ENCODE measurements at regions of chr22 and their contacts with region 1.

Region 1: GRCh38 chr22:37199103-37199759 is 11.2 kb upstream of the C1QTNF6 start:
- DNase-seq: peak; percentile 99
- ATAC-seq: peak; percentile 94

Region 2: GRCh38 chr22:37077884-37078485 is 121.2 kb before region 1 on chr22:
- intact Hi-C with region 1: loop called (anchors 5 kb)
- DNase-seq: peak; percentile 70
- ATAC-seq: peak; percentile 43

Region 3: GRCh38 chr22:37148742-37149665 is 50.2 kb before region 1 on chr22:
- intact Hi-C with region 1: no loop called
- DNase-seq: peak; percentile 11
- ATAC-seq: no peak

Region 4: DNA sequence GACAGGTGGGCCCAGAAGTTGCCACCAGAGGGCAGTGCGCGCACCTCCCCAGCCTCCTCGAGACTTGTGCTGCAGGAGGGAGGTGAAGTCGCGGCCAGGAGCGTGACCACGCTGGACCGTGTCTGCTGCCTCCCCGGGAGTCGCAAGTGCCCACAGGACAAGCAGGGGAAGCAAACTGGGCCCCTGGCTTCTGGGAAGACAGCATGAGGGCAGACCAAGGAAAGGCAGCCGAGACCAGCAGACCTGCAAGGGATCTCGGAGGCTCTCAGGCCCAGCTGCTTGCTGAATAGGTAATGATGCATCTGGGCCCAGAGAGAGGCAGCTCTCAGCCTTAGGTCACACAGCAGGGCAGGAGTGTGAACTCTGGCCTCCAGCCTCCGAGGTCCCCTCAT is 32.6 kb before region 1 on chr22:
- intact Hi-C with region 1: loop called (anchors 2 kb)
- DNase-seq: peak; percentile 92
- ATAC-seq: peak; percentile 96

Measured in Right ventricle myocardium superior (tissue), 1 donor.